CD4-positive, alpha-beta T cell (primary cell): ENCODE measurements at regions of chr17 and their contacts with region 1.

Region 1: DNA sequence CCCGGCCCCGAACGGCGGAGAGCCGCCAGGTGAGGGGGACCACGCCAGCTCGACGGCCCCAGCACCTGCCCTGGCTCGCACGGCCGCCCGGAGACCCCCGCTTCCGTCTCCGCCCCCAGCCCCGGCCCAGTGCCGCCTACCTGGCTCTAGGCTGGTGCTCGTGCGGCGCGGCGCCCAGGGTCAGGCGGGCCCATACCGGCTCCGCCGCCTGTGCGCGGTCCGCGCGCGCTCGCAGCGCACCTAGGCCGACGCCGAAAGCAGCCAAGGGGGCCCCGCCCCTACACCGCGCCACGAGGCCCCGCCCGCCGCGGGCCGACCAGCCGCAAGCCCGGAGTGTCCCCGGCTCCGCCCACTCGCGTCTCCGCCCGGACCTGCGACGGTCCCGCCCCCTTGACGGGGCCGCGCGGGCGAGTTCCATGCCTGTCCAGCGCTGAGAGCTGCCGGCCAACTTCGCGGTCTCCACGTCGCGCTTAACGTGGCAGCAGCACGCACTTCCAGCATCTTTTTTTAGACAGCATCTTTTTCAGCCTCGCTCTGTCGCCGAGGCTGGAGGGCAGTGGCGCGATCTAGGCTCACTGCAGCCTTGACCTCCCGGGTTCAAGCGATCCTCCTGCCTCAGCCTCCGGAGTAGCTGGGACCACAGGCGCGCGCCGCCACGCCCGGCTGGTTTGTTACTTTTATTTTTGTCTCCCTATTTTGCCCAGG is at the start of gene SLC25A39:
- DNase-seq: peak; percentile 87 to 97 (median 94)
- ATAC-seq: peak; percentile 69
- H3K4me3 ChIP-seq: peak within 1 kb of the TSS; percentile 85
- H3K4me3 Mint-ChIP-seq: peak within 1 kb of the TSS; percentile 95
- H3K27ac ChIP-seq: peak within 1 kb of the TSS; percentile 83 to 90
- H3K27ac Mint-ChIP-seq: peak within 1 kb of the TSS; percentile 96
- H3K4me1 ChIP-seq: peaks cover 44% of the 10 kb centered on the region
- H3K4me1 Mint-ChIP-seq: peaks cover 27% of the 10 kb centered on the region
- H3K27me3 ChIP-seq: no peaks in the 10 kb centered on the region
- H3K27me3 Mint-ChIP-seq: no peaks in the 10 kb centered on the region
- CTCF ChIP-seq: no peak
- total RNA-seq, gene SLC25A39: 55.5 to 65.5 TPM

Region 2: GRCh38 chr17:44199553-44200477 is 124.9 kb before region 1 on chr17 and contains the start of gene ATXN7L3:
- CTCF ChIA-PET with region 1: interaction called, 4 read pairs
- POLR2A ChIA-PET with region 1: interaction called, 13 read pairs
- intact Hi-C with region 1: no loop called
- DNase-seq: peak; percentile 99 to 100 (median 99)
- ATAC-seq: peak; percentile 80
- H3K4me3 ChIP-seq: peak within 1 kb of the TSS; percentile 94
- H3K4me3 Mint-ChIP-seq: peak within 1 kb of the TSS; percentile 93
- H3K27ac ChIP-seq: peak within 1 kb of the TSS; percentile 83 to 87
- H3K27ac Mint-ChIP-seq: peak within 1 kb of the TSS; percentile 93
- H3K4me1 ChIP-seq: peaks cover 45% of the 10 kb centered on the region
- H3K4me1 Mint-ChIP-seq: peaks cover 46% of the 10 kb centered on the region
- H3K27me3 ChIP-seq: no peaks in the 10 kb centered on the region
- H3K27me3 Mint-ChIP-seq: no peaks in the 10 kb centered on the region
- CTCF ChIP-seq: no peak
- total RNA-seq, gene ATXN7L3: 85.2 to 99.2 TPM

Region 3: GRCh38 chr17:44293509-44294226 is 31.1 kb before region 1 on chr17:
- CTCF ChIA-PET with region 1: no interaction called
- POLR2A ChIA-PET with region 1: no interaction called
- intact Hi-C with region 1: no loop called
- DNase-seq: no peak
- ATAC-seq: no peak
- H3K4me3 ChIP-seq: no peak overlapping the region
- H3K4me3 Mint-ChIP-seq: no peak overlapping the region
- H3K27ac ChIP-seq: no peak overlapping the region
- H3K27ac Mint-ChIP-seq: no peak overlapping the region
- H3K4me1 ChIP-seq: no peaks in the 10 kb centered on the region
- H3K4me1 Mint-ChIP-seq: no peaks in the 10 kb centered on the region
- H3K27me3 ChIP-seq: peaks cover 0 to 5% of the 10 kb centered on the region in 2 experiments
- H3K27me3 Mint-ChIP-seq: peaks cover 17% of the 10 kb centered on the region
- CTCF ChIP-seq: no peak

Region 4: GRCh38 chr17:44308320-44308818 is 16.4 kb before region 1 on chr17 and contains the start of gene RUNDC3A:
- CTCF ChIA-PET with region 1: no interaction called
- POLR2A ChIA-PET with region 1: interaction called, 8 read pairs
- intact Hi-C with region 1: loop called in 1 of 2 experiments (anchors 2 kb)
- DNase-seq: peak; percentile 75 to 92 (median 84)
- ATAC-seq: peak; percentile 90
- H3K4me3 ChIP-seq: peak within 1 kb of the TSS; percentile 38
- H3K4me3 Mint-ChIP-seq: peak within 1 kb of the TSS; percentile 42
- H3K27ac ChIP-seq: no peak within 1 kb of the TSS
- H3K27ac Mint-ChIP-seq: no peak within 1 kb of the TSS
- H3K4me1 ChIP-seq: peaks cover 26% of the 10 kb centered on the region
- H3K4me1 Mint-ChIP-seq: peaks cover 23% of the 10 kb centered on the region
- H3K27me3 ChIP-seq: peaks cover 20 to 21% of the 10 kb centered on the region in 2 experiments
- H3K27me3 Mint-ChIP-seq: peaks cover 55% of the 10 kb centered on the region
- CTCF ChIP-seq: no peak
- total RNA-seq, gene RUNDC3A: not detected